ENCODE measurements at regions of chr4 and their contacts with region 1.

Region 1: DNA sequence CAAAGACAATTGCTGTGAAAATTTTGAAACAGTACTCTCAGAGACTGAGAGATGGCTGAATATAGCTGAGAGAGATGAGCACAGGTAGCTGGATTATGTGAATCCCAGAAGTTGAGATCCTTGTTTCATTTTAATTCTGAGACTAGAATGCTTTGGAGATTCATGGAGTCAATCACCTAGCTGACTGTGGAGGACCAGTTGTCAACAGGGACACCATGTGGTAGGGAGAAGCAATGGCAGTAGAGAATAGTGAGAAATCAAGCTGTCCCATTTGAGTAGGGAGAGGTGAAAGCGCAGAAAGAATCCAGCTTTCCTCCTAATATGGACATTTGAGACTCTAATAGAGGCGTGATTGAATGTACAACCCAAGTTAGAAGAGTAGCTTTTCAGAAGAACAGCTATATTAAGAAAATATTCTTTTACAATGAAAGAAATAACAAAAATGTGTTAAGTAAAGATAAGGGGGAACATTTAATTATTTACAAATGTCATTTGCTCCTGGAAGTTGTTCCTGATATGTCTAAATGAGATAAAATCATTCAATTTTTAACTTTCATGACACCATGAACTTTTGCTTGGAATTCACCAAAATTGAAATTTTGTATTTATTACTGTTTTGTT is 30.3 kb upstream of the GLRB start:
- DNase-seq: no peak
- ATAC-seq: peak; percentile 92
- H3K4me3 Mint-ChIP-seq: no peak overlapping the region
- H3K27ac Mint-ChIP-seq: no peak overlapping the region
- H3K4me1 Mint-ChIP-seq: peaks cover 7% of the 10 kb centered on the region
- H3K27me3 Mint-ChIP-seq: no peaks in the 10 kb centered on the region; the same call in 1 of the 2 replicates
- CTCF ChIP-seq: peak; percentile 38

Region 2: DNA sequence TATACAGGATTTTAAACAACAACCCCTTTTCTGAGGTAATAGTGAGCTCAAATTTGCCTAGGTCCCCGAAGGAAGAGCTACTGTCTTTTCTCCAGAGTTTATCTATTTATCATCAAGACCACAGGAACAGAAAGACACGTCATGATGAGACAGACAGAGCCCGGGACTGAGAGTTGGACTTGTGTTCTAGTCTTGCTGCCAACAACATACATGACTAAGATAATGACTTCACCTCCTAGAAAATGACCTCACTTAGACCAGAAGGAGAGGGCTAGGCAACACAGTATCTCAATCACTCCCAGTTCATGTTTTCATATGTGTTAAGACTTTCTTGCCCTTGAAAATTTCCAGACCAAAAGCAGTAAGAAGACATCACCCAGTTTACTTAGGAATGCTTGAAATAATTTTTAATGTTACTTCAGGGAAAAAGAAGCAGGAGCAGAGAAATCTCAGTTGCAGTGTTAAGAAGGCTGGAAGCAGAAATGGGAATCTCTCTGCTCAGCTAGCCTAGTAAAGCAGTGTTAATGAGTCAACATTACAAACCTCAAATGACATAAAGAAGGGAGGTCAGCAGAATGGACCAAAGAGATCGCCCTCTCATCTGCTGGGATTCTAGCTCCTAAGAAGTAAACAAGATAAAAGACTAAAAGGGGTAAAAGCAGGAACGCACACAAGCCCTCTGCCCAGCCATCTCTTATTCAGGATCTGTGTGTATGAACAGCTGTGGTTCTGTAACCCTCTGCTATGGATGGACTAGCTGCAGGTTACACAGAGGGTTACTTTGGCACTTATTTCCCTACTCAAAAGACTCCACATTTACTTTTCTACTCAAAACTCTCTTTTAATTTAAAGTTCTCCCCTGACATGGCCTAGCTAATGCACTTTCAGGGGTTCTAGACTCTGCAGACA is 98.8 kb before region 1 on chr4:
- CTCF ChIA-PET with region 1: no interaction called
- POLR2A ChIA-PET with region 1: no interaction called
- DNase-seq: no peak
- ATAC-seq: no peak
- H3K4me3 Mint-ChIP-seq: no peak overlapping the region
- H3K27ac Mint-ChIP-seq: no peak overlapping the region
- H3K4me1 Mint-ChIP-seq: peaks cover 24% of the 10 kb centered on the region
- H3K27me3 Mint-ChIP-seq: no peaks in the 10 kb centered on the region
- CTCF ChIP-seq: no peak

Region 3: DNA sequence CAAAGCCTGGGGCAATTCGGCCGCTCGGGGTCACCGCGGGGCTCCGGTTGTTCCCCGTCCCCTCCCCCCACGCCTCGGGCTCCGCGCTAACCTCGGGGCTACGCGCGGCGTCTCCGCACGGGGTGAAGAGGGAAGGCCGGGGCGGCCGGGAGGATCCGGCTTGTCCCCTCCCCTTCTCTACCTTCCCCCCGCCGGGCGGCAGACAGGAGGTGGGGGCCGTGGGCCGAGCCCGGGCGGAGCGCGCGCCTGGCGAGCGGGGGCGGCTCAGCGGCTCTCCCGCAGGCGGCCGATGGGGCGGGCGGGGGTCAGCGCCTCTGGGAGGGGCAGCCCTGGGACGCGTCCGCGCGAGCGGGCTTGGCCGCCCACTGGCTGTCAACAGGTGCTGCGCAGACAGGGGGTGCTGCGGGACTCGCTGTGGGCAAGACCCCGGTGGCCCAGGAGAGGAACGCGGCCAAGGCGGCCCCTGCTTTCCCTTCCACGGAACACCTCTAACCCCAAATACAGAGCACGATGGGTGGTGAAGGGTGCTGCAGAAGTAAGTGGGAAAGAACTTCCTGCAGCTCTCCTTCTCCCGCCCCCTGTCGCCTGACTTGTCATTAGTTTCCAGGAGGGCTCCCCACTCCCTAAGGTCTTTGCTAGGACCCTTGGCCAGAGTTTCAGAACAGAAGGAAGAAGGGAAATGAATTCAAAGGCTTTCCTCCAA is 73.8 kb before region 1 on chr4 and contains the start of gene PDGFC:
- CTCF ChIA-PET with region 1: interaction called, 10 read pairs
- POLR2A ChIA-PET with region 1: no interaction called
- DNase-seq: peak; percentile 86
- ATAC-seq: peak; percentile 77
- H3K4me3 Mint-ChIP-seq: peak within 1 kb of the TSS; percentile 81
- H3K27ac Mint-ChIP-seq: peak within 1 kb of the TSS; percentile 44
- H3K4me1 Mint-ChIP-seq: peaks cover 33% of the 10 kb centered on the region
- H3K27me3 Mint-ChIP-seq: peaks cover 22% of the 10 kb centered on the region
- CTCF ChIP-seq: no peak
- total RNA-seq, gene PDGFC: 3.1 to 5.3 TPM (median 3.5 TPM) in 3 replicates

Region 4: DNA sequence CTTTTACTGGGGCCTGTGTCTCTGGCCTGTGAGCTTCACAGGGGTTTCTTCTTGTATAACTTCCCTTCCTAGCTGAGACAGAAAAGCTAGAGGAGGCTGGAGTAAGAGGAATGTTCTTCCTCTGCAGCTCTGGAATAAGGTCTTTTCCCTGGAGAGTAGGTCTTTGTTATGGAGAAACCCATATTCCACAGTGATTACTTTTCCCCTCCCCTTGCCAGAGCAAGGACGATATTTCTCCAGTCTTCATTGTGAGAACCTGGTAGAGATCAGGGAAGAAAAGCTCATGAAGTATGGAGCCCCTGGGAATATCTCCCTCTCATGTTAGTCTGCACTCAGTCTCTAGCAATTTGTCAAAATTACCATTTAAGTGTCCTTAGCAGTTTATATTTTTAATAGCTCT is 11.6 kb after region 1 on chr4:
- CTCF ChIA-PET with region 1: interaction called, 11 read pairs
- POLR2A ChIA-PET with region 1: no interaction called
- DNase-seq: no peak
- ATAC-seq: peak; percentile 91
- H3K4me3 Mint-ChIP-seq: peak overlapping the region; percentile 25; the same call in 1 of the 2 replicates
- H3K27ac Mint-ChIP-seq: peak overlapping the region; percentile 79
- H3K4me1 Mint-ChIP-seq: peaks cover 49% of the 10 kb centered on the region
- H3K27me3 Mint-ChIP-seq: no peaks in the 10 kb centered on the region
- CTCF ChIP-seq: no peak

Region 5: GRCh38 chr4:157096439-157096838 is 50.8 kb after region 1 on chr4:
- CTCF ChIA-PET with region 1: no interaction called
- POLR2A ChIA-PET with region 1: no interaction called
- DNase-seq: no peak
- ATAC-seq: no peak
- H3K4me3 Mint-ChIP-seq: no peak overlapping the region
- H3K27ac Mint-ChIP-seq: no peak overlapping the region
- H3K4me1 Mint-ChIP-seq: no peaks in the 10 kb centered on the region
- H3K27me3 Mint-ChIP-seq: no peaks in the 10 kb centered on the region
- CTCF ChIP-seq: no peak